ENCODE measurements at regions of chr1 and their contacts with region 1.

Region 1: DNA sequence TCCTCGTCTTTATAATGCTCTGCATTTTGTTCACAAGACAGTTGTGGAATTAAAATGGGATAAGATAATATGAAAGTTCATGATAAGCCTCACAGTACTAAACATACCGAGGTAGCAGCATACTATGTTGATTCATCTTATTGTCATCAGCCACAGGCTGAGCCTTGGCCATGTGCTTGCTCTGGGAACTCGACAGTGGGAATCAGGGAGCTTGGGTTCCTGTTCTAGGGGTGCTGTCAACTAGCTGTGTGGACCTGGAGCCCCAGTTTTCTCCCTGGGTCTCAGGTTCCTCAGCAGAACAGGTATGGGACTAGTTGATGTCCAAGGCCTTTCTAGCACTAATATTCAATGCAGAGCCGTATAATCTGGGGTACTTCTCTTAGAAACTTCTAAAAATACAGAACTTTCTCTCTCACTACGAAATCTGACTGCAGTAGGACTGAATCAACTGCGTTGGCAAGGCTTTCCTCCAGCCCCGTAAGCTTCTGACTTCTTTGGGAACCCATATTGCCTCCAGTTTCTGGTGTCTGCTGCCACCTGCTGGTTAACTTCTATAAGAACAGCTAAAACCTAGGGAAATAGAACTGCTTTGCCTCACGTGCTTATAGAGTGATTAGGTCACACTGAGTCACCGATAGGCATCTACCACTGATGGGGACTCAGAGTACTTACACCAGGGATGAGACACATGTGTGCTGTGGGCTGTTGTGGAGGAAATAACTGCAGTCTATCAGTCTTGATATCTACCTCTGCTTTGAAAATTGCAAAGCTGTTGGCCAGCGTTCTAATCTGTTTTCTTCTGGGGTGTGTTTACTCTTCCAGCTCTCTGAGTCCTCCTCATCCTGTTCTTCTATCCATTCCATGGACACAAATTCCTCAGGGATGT is 110.9 kb downstream of the RGL1 start:
- DNase-seq: peak; percentile 97

Region 2: GRCh38 chr1:183655562-183656075 is 260.2 kb before region 1 on chr1:
- in situ Hi-C with region 1: loop called (anchors 25 kb)
- DNase-seq: peak; percentile 81

Measured in ACHN (cell line).